HCT116 (cell line): ENCODE measurements at regions of chr7 and their contacts with region 1.

Region 1: DNA sequence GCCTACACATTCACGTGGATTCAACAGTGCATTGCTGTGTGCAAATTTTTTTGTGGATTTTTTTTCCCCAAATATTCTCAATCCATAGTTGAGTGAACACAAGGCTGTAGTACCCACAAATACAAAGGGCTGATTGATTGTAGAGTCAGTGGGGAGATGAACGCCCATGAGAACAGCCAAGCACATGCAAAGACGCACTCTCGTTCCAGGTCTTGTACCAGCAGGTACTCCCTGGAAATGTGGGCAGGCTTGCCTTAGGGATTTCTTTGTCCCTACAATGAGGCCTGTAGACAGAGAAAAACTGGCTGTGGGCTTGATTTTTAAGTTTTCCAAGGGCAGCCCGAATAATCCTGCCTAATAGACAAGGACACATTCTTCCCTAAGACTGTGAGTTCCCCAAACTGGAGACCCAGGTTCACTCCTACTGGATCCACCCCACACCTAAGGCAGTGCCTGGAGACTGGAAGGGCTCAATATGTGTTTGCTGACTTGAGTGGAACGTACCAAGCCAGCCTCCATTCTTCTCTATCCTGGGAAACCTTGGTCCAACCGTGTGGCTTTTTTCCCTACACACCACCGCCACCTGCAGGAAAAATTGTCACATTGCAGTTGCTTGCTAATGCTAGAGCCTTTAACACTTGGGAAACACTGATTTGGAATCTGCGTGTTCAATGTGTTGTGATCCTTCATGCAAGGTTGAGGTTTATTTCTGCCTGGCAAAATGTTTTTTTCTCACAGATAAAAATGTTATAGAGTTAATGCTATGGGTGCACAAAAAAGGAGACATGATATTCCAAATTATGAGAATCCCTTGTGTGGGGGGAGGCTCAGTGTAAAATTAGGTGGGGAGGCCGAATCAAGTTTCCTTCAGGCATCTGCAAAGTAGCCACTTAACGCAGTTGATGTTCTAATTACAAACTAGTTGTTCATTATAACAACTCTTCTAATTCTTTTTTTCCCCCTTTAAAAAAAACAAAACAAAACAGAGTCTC is 49.3 kb downstream of the PPP1R17 start:
- DNase-seq: peak; percentile 35
- ATAC-seq: peak; percentile 89
- H3K4me3 ChIP-seq: no peak overlapping the region
- H3K27ac ChIP-seq: no peak overlapping the region
- H3K4me1 ChIP-seq: no peaks in the 10 kb centered on the region
- H3K27me3 ChIP-seq: peaks cover 9% of the 10 kb centered on the region
- CTCF ChIP-seq: peak; percentile 63 to 81 (median 81)
- POLR2A ChIP-seq: no peak
- RAD21 ChIP-seq: peak; percentile 85

Region 2: DNA sequence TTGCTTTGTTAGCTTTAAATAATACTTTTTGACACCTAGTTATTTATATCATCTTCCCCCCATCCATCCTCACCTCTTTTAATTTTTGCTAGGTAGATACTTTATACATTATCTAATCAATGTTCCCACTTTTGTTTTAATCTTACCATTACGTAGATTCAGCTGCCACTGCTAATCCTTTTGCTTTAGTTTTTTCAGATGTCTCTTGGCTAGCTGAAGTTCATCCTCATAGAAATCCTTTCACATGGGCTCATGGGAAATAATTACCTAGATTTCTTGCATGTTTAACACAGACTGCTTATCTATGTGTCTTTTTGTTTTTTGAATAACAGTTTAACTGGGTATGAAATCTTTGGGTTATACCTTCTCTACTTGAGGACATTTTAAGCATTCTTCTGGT is 1391.8 kb before region 1 on chr7:
- CTCF ChIA-PET with region 1: no interaction called
- POLR2A ChIA-PET with region 1: no interaction called
- RAD21 ChIA-PET with region 1: no interaction called
- intact Hi-C with region 1: no loop called
- DNase-seq: no peak
- ATAC-seq: no peak
- H3K4me3 ChIP-seq: no peak overlapping the region
- H3K27ac ChIP-seq: no peak overlapping the region
- H3K4me1 ChIP-seq: peaks cover 20 to 24% of the 10 kb centered on the region in 2 experiments
- H3K27me3 ChIP-seq: no peaks in the 10 kb centered on the region
- CTCF ChIP-seq: no peak
- POLR2A ChIP-seq: no peak
- RAD21 ChIP-seq: no peak

Region 3: GRCh38 chr7:30983042-30983913 is 753.0 kb before region 1 on chr7:
- CTCF ChIA-PET with region 1: no interaction called
- POLR2A ChIA-PET with region 1: no interaction called
- RAD21 ChIA-PET with region 1: no interaction called
- intact Hi-C with region 1: loop called (anchors 5 kb)
- DNase-seq: peak; percentile 70
- ATAC-seq: peak; percentile 98
- H3K4me3 ChIP-seq: no peak overlapping the region
- H3K27ac ChIP-seq: no peak overlapping the region
- H3K4me1 ChIP-seq: peaks cover 7 to 10% of the 10 kb centered on the region in 2 experiments; a peak in 3 of 4 replicates
- H3K27me3 ChIP-seq: peaks cover 14% of the 10 kb centered on the region
- CTCF ChIP-seq: peak; percentile 82 to 95 (median 90)
- POLR2A ChIP-seq: no peak
- RAD21 ChIP-seq: peak; percentile 94

Region 4: DNA sequence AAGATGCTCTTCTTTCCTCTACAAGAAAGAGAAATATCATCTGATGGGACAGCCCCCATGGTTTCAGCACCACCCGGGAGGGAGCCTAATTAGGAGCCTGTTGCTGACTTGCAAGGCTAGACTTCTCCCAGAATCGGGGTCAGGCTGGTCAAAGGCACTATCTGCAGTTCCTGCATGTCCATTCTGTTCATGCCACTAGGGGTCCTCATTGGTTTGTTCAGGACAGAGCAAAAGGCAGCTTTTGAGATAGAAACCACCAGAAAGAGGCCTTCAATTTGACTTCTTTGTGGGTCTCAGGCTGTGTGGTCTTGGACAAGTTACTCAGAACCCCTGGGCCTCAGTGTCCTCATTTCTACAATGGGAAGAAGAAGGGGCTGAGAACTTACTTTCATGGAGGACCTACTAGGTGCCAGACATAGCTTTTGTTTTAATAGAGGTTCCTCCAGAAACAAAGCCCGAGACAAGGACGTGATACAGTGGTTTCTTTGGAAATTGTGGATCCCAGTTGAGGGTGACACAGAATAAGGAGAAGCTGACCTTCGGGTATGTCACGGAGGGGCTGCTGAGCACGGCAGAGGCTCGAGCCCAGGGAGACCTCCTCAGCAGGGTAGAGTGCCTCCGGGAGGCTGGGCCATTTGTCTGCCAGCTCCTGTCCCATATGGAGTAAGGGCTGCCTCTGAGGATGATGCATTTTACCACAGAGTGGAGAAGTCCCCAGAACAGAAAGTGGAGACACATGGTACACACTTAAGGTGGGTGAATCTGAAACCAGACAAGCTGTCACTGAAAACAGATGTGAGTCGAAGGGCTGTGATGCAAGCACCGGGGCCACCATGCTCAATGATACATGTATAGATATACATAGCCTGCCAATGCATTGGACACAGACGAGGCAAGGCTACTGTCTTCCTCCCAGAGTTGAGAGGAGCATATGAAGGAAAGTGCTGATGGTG is 362.7 kb before region 1 on chr7:
- CTCF ChIA-PET with region 1: no interaction called
- POLR2A ChIA-PET with region 1: no interaction called
- RAD21 ChIA-PET with region 1: no interaction called
- intact Hi-C with region 1: loop called (anchors 10 kb)
- DNase-seq: peak; percentile 51
- ATAC-seq: peak; percentile 89
- H3K4me3 ChIP-seq: no peak overlapping the region
- H3K27ac ChIP-seq: no peak overlapping the region
- H3K4me1 ChIP-seq: no peaks in the 10 kb centered on the region
- H3K27me3 ChIP-seq: peaks cover 38% of the 10 kb centered on the region
- CTCF ChIP-seq: peak; percentile 45 to 76 (median 72); a peak in 5 of 6 replicates
- POLR2A ChIP-seq: no peak
- RAD21 ChIP-seq: peak; percentile 70

Region 5: GRCh38 chr7:31488562-31489203 is 247.6 kb before region 1 on chr7:
- CTCF ChIA-PET with region 1: no interaction called
- POLR2A ChIA-PET with region 1: no interaction called
- RAD21 ChIA-PET with region 1: no interaction called
- intact Hi-C with region 1: loop called (anchors 5 kb)
- DNase-seq: peak; percentile 41
- ATAC-seq: peak; percentile 100
- H3K4me3 ChIP-seq: no peak overlapping the region
- H3K27ac ChIP-seq: no peak overlapping the region
- H3K4me1 ChIP-seq: no peaks in the 10 kb centered on the region; a peak in 1 of 4 replicates
- H3K27me3 ChIP-seq: peaks cover 6% of the 10 kb centered on the region; the same call in 1 of the 2 replicates
- CTCF ChIP-seq: peak; percentile 60 to 93 (median 92); a peak in 5 of 6 replicates
- POLR2A ChIP-seq: no peak
- RAD21 ChIP-seq: peak; percentile 74

Region 6: DNA sequence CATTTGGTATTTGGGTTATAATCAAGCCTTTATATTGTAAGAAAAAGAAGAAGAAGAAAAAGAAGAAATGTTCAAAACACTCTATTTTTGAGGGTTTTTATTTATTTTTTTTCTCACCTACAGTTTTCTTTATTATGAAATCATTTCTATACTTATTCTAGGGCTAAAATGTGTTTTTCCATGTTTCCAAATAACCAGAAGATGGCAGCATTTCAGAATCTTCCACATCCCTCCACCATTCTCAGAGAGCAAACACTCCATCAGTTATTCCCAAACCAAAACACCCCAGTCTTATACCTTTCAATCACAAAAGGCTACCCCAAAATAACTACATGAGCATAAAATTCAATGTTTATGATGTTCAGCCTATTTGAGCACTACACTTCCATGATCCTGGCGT is 88.0 kb before region 1 on chr7:
- CTCF ChIA-PET with region 1: no interaction called
- POLR2A ChIA-PET with region 1: no interaction called
- RAD21 ChIA-PET with region 1: no interaction called
- intact Hi-C with region 1: loop called (anchors 1 kb)
- DNase-seq: no peak
- ATAC-seq: no peak
- H3K4me3 ChIP-seq: no peak overlapping the region
- H3K27ac ChIP-seq: no peak overlapping the region
- H3K4me1 ChIP-seq: no peaks in the 10 kb centered on the region
- H3K27me3 ChIP-seq: peaks cover 24% of the 10 kb centered on the region; the same call in 1 of the 2 replicates
- CTCF ChIP-seq: peak in 1 of 3 experiments; percentile 22; a peak in 1 of 6 replicates
- POLR2A ChIP-seq: no peak
- RAD21 ChIP-seq: no peak